ENCODE measurements at regions of chr22 and their contacts with region 1.

Region 1: GRCh38 chr22:42437488-42438292 is 5.5 kb upstream of the NFAM1 start:
- DNase-seq: peak; percentile 56 to 95
- H3K4me3 ChIP-seq: no peak overlapping the region
- CTCF ChIP-seq: peak in 1 of 3 donors; percentile 97
- POLR2A ChIP-seq: no peak

Region 2: GRCh38 chr22:41966607-41967240 is 471.0 kb before region 1 on chr22:
- intact Hi-C with region 1: loop called (anchors 10 kb)
- DNase-seq: peak in 1 of 2 donors; percentile 32
- H3K4me3 ChIP-seq: no peak overlapping the region
- CTCF ChIP-seq: no peak
- POLR2A ChIP-seq: no peak

Region 3: GRCh38 chr22:42090596-42091454 is 346.9 kb before region 1 on chr22 and contains the start of gene NDUFA6:
- intact Hi-C with region 1: loop called (anchors 2 kb)
- DNase-seq: peak; percentile 99 to 100
- H3K4me3 ChIP-seq: peak within 1 kb of the TSS; percentile 88
- CTCF ChIP-seq: peak in 2 of 3 donors; percentile 71 to 94
- POLR2A ChIP-seq: peak in 1 of 2 donors; percentile 31
- total RNA-seq, gene NDUFA6: 48.8 to 74.7 (median 58.4) TPM

Region 4: GRCh38 chr22:42114721-42115120 is 323.0 kb before region 1 on chr22:
- intact Hi-C with region 1: no loop called
- DNase-seq: peak in 1 of 2 donors; percentile 64
- H3K4me3 ChIP-seq: no peak overlapping the region
- CTCF ChIP-seq: no peak
- POLR2A ChIP-seq: no peak

Region 5: DNA sequence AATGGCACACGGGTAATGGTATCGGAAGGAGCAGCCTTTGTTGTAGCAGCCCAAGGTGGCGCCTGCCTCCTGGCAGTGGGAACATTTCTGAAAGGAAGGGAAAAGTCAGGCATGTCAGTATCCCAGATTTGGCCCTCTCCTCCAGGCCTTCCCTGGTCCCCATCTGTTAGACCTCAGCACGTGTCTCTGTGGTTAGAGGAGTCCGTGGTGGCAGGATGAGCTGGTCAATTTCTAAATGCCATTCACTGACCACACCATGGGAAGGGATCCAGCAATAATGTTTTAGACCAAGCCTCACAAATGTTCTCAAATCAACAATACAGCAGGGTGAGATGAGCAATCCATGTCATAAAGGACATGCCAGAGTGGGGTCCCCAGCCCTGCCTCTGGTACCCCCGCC is 258.1 kb before region 1 on chr22:
- intact Hi-C with region 1: loop called (anchors 10 kb)
- DNase-seq: no peak
- H3K4me3 ChIP-seq: no peak overlapping the region
- CTCF ChIP-seq: no peak
- POLR2A ChIP-seq: no peak

Measured in lower leg skin (tissue), 4 donors.